Cardiac septum (tissue), 1 donor: ENCODE measurements at regions of chr20 and their contacts with region 1.

Region 1: DNA sequence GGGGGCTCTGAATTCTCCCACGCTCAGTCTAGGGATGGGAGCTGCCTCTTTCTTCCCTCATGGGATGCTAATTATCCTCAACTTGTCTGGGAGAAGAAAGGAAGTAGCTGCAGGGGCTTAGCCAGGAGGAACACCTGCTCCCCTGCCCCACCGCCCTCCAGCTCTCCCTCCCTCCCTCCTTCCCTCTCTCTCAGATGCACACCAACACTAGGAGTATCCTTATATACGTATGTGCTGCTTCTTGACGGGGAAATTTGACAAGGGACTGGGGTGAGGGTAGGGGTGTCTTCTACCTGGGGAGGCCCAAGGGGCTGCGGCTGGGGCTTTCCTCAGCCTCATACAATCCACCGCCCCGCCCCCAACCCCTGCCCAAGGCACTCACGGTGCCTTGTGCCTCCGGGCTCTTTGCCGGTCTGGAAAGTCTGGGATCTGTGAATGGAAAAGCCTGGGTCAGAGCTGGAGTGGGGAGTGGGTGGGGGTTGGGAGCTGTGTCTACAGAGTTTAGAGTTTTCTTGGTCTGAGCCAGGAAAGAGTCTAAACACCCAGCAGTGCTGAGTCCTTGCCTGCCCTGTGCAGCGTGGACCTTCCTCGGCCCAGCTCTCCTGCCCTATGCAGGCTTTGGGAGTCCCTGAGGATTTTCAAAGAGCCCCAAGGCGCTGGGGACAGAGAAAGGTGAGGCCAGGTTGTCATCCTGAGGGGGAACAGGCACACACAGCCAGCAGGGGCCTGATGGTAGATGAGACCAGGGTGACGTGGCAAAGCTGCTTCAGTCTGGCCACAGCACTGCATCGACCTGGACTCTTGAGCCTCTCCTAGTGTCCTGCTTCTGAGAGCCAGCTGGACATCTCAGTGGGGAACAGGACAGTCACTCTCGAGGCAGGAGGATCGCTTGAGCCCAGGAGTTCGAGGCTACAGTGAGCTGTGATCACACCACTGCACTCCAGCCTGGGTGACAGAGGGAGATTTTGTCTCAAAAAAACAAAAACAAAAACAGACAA is 29.3 kb upstream of the EMILIN3 start:
- DNase-seq: no peak

Region 2: GRCh38 chr20:41339507-41340326 is 56.2 kb before region 1 on chr20:
- intact Hi-C with region 1: no loop called
- DNase-seq: peak; percentile 89

Region 3: DNA sequence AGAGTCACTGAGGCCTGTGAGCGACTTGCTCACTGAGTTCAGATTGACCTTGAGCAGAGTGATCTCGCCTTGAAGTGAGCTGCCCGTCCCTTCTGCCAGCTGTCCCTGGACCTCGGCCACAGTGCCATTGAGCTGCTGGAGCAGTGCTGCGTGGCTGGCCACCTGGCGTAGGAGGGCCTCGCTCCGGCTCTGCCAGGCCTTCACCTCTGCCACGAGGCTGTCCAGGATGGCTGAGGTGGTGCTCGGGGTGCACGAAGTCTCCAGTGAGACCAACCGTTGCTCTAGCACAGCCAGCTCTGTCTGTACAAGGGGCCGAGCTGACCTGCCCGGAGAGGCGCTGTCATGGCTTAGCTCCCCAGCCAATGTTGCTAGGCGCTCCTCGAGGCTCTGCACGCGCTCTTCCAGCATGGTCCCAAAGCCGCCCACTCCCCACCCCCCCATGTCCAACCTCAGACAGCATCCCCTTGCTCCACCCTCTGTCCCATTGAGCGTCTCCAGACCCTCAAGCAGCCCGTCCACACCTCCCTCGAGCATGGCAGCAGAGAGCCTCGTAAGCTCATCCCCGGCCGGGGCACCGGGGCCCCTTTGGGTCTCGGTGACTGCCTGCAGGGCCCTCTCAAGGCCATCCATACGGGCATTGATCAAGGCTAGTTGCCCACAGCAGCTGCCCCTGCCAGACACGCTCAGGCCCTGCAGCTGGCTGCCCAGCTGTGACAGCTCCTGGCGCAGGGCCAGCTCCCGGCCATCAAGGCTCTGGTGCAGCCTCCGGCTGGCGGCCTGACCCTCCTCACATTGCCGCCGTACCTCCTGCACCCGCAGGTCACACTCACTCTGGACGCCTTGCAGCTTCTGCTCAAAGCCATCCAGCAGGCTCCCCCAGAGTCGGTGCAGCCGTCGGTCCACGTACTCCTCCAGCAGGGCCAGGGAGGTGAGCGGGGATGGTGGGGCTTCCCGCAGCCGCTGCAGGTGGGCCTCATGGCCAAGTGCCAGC is 33.9 kb before region 1 on chr20:
- intact Hi-C with region 1: loop called (anchors 5 kb)
- DNase-seq: no peak